ENCODE measurements at regions of chr2 and their contacts with region 1.

Region 1: DNA sequence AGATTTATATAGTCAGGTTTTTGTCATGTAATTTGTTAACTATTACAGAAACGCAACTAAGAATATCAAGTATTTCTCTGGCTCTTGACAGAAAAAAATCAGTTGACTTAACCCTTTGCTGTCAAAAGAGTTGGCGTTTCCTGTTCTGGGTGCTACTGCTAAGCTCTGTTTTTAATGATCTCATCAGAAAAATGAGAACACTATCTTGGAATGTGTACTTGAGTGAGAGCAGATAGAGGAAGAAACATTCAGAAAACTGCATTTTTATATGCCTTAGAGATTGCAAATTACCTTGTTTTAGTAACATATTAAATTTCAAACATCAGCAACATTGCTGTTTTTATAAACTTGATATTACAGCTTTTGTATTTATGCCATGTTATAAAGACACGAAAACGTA is 297.9 kb downstream of the RDH14 start:
- DNase-seq: no peak

Region 2: DNA sequence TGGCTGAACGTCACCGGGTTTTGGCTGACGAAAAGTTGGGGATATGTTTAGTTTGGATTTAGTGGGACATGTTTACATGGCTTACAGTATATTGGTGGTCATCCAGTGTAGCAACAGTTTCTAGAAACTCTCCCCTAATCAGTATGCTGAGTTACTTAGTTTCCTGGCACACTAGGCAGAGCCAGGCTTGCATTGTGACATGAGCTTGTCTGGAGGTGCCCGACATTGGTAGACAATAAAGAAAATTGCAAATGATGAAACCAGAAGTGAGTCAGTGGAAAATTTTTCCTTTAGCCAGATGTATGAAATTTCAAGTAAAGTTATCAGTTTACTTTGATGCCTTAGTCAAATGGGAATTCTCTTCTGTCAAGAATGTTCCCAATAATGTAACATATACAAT is 21.7 kb after region 1 on chr2:
- CTCF ChIA-PET with region 1: interaction called, 10 read pairs
- POLR2A ChIA-PET with region 1: no interaction called
- DNase-seq: no peak

Region 3: DNA sequence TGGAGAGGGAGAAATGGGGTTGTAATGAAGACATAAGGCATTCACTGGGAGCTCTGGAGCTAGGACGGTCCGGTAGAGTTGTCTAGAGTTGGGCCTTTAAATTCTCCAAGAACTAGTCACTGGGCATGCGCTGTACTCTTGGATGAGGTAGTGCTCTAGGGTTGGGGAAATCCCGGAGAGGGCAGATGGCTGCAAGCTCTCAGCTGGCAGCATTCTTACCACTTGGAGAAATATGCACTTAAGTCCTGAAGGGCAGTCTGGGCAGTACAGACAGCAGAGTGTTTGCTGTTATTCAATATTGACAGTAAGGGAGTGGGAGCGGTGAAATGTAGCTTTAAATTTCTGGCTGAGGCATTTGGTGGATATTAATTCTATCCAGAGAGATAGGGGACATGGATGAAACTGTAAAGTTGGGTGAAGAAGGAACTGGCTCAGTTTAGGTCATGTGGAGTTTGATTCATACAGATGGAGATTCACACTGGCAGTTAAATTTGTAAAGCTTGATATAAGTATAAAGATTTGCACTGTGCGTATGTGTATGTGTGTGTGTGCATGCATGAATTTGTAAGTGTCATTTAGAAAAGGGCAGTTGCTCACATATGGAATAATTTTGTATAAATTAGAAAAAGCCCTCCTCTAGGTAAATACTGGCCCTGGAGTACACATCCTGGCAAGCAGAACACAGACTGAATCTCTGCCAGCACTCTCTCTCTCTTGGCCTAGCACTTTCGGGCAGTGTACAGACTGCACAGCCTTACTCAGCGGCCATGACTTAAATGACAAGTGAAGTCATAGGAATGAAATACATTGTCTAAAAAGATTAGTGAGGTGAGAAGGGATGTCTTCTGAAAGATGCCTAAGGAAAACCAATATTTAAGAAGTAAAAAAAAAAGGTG is 83.5 kb after region 1 on chr2:
- CTCF ChIA-PET with region 1: no interaction called
- POLR2A ChIA-PET with region 1: no interaction called
- DNase-seq: no peak

Measured in HEK293T (cell line).